ENCODE measurements at regions of chr1 and their contacts with region 1.

Region 1: DNA sequence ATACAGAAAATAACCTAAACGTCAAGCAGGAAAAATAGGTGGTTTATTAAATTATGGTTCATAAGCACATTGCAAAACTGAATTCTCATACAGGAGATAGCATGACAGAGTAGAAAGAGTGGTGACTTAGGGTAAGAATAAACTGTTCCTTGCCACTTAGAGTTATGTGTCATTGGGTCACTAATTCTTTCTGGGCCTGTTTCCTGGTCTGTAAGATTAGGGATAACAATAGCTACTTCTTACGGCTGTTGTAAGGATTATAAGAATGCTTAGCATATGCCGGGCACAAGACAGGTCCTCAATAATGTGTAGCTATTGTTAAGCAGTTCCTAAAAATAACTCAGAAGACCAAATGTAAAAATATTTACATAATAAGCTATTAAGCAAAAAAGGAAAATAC is 24.2 kb downstream of the SNRNP40 start:
- DNase-seq: no peak
- H3K4me3 ChIP-seq: no peak overlapping the region
- H3K27ac ChIP-seq: no peak overlapping the region
- H3K4me1 ChIP-seq: no peaks in the 10 kb centered on the region
- H3K27me3 ChIP-seq: no peaks in the 10 kb centered on the region
- CTCF ChIP-seq: no peak
- EP300 ChIP-seq: no peak
- POLR2A ChIP-seq: no peak
- RAD21 ChIP-seq: no peak

Region 2: GRCh38 chr1:31289021-31289420 is 16.7 kb after region 1 on chr1:
- CTCF ChIA-PET with region 1: interaction called, 9 read pairs
- POLR2A ChIA-PET with region 1: interaction called, 45 read pairs
- DNase-seq: no peak
- H3K4me3 ChIP-seq: no peak overlapping the region
- H3K27ac ChIP-seq: no peak overlapping the region
- H3K4me1 ChIP-seq: no peaks in the 10 kb centered on the region
- H3K27me3 ChIP-seq: no peaks in the 10 kb centered on the region
- CTCF ChIP-seq: no peak
- EP300 ChIP-seq: no peak
- POLR2A ChIP-seq: no peak
- RAD21 ChIP-seq: no peak

Region 3: DNA sequence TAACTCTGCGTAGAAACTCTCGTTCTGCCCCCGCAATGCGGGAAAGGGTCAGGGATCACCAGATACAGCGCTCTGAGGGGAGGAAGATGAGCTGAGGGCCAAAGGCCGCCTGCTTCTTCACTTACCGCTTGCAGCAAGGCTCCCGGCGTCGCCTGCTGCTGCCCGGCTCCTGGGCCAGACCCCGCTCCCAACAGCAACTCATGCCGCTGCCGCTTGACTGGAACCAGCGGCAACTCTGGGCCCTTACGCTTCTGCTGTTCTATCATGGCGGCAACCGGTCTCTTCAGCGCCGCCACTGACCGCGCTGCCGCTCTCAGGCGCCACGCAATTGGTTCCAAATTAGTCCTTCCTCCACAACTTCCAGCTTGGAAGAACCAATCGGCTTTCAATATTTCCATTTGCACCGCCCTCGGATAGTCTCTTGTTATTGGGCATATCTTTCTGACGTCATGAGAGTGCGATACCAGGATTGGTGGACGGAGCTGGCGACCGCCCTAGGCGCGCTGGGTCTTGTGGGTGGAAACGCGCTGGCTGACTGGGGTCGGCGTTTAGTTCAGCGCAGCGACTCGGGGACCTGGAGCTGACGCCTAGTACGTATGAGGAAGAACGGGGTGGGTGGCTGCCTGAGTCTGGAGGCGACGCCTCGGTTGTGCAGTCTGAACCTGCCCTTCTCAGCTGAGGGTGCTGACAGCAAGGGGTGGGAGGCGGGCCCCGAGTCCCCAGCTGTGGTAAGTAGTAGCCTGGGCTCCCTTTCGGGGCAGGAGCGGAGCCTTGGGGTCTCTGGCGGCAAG is 24.3 kb after region 1 on chr1 and contains the starts of genes SNRNP40 and ZCCHC17:
- CTCF ChIA-PET with region 1: interaction called, 6 read pairs
- POLR2A ChIA-PET with region 1: interaction called, 45 read pairs
- DNase-seq: peak; percentile 91 to 96
- H3K4me3 ChIP-seq: peak within 1 kb of the TSS; percentile 90 to 99 (median 93)
- H3K27ac ChIP-seq: peak within 1 kb of the TSS; percentile 97
- H3K4me1 ChIP-seq: peaks cover 0 to 8% (median 4%) of the 10 kb centered on the region in 4 experiments; a peak in 4 of 7 replicates
- H3K27me3 ChIP-seq: no peaks in the 10 kb centered on the region
- CTCF ChIP-seq: no peak
- EP300 ChIP-seq: no peak
- POLR2A ChIP-seq: peak; percentile 88 to 97
- RAD21 ChIP-seq: no peak
- total RNA-seq, gene SNRNP40: 111 and 113 TPM in 2 replicates
- total RNA-seq, gene ZCCHC17: 55.5 and 59.3 TPM in 2 replicates

Region 4: GRCh38 chr1:31394628-31395193 is 122.3 kb after region 1 on chr1:
- CTCF ChIA-PET with region 1: no interaction called
- POLR2A ChIA-PET with region 1: no interaction called
- DNase-seq: peak; percentile 79 to 98
- H3K4me3 ChIP-seq: peak overlapping the region in 3 of 4 experiments; percentile 34 to 51 (median 47); a peak in 6 of 8 replicates
- H3K27ac ChIP-seq: no peak overlapping the region
- H3K4me1 ChIP-seq: peaks cover 0 to 4% (median 3%) of the 10 kb centered on the region in 4 experiments; a peak in 4 of 7 replicates
- H3K27me3 ChIP-seq: no peaks in the 10 kb centered on the region
- CTCF ChIP-seq: peak; percentile 85 to 93 (median 92)
- EP300 ChIP-seq: no peak
- POLR2A ChIP-seq: no peak
- RAD21 ChIP-seq: peak; percentile 82 to 86